ENCODE measurements at regions of chr4 and their contacts with region 1.

Region 1: DNA sequence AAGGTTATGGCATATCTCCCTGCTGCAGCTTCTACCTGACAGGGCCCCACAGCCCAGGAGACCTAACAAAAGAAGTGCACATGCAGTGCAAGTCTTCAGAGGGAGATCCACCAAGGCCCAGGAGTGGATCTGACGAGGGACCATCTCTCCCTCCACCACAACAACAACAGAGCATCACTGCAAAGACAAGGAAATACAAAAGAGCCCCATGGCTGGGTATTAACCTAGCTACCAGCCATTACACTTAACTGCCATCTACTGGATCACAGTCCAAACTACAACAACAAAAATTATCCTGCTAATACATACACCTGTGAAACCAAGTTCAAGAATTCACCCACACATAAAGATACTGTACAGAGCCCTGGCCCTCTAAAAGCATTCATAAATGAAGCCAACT is 280.2 kb upstream of the SLC7A11 start:
- DNase-seq: no peak
- H3K4me3 Mint-ChIP-seq: no peak overlapping the region
- H3K27ac Mint-ChIP-seq: no peak overlapping the region
- H3K4me1 Mint-ChIP-seq: no peaks in the 10 kb centered on the region
- H3K27me3 Mint-ChIP-seq: no peaks in the 10 kb centered on the region

Region 2: GRCh38 chr4:138035781-138036258 is 486.5 kb before region 1 on chr4:
- CTCF ChIA-PET with region 1: no interaction called
- intact Hi-C with region 1: loop called (anchors 2 kb)
- DNase-seq: no peak
- H3K4me3 Mint-ChIP-seq: no peak overlapping the region
- H3K27ac Mint-ChIP-seq: no peak overlapping the region
- H3K4me1 Mint-ChIP-seq: no peaks in the 10 kb centered on the region
- H3K27me3 Mint-ChIP-seq: no peaks in the 10 kb centered on the region

Region 3: GRCh38 chr4:138494931-138495330 is 27.4 kb before region 1 on chr4:
- CTCF ChIA-PET with region 1: no interaction called
- intact Hi-C with region 1: no loop called
- DNase-seq: peak; percentile 4
- H3K4me3 Mint-ChIP-seq: no peak overlapping the region
- H3K27ac Mint-ChIP-seq: no peak overlapping the region
- H3K4me1 Mint-ChIP-seq: no peaks in the 10 kb centered on the region
- H3K27me3 Mint-ChIP-seq: no peaks in the 10 kb centered on the region

Measured in activated naive CD4-positive, alpha-beta T cell treated with anti-CD3 and anti-CD28 coated beads for 36 hours (primary cell).